Colonic mucosa (tissue), 4 donors: ENCODE measurements at regions of chr3 and their contacts with region 1.

Region 1: DNA sequence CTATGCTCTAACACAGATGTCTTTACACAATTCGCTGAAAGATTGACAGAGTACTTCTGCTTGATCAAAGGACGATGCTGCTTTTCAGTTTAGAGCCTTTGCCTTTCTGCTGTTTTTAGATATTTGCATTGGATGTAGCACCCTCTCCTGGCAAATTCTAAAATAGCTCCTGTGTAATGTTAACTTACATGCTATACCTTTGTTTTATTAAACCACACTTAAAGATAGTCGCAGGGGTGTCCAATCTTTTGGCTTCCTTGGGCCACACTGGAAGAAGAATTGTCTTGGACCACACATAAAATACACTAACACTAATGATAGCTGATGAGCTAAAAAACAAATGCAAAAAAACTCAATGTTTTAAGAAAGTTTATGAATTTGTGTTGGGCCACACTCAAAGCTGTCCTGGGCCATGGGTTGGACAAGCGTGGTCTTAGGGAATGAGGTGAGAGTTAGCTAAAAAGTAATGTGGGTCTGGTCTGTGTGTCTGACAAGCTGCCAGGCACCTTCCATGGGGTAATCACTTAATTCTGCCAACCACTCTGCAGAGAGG is 62.9 kb downstream of the ATG7 start:
- DNase-seq: peak; percentile 23
- H3K4me3 ChIP-seq: no peak overlapping the region
- H3K27ac ChIP-seq: no peak overlapping the region
- H3K4me1 ChIP-seq: no peaks in the 10 kb centered on the region
- H3K27me3 ChIP-seq: no peaks in the 10 kb centered on the region
- CTCF ChIP-seq: peak; percentile 50

Region 2: DNA sequence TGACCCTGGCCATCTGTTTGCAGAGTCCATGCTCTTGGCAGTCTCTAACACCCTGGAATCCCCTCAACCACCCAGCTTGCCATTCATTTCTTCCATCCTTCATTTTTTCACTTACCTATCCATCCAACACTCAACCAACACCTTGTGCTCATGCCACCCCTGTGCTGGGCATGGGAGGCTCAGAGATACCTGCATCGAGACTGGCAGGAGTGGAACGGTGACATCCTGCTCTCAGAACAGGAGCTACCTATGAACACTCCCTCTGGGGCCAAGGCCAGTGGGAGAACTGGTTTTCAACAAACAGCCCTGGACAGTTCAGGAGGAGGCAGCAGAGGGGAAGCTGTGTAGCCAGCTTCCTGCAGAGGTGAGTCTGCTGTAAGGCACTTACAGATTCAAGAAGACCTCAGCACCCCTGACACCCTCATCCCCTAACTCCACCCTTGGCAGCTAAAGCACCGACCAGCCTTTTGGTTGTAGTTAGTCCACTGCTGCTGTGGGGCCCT is 810.3 kb before region 1 on chr3:
- intact Hi-C with region 1: no loop called
- DNase-seq: no peak
- H3K4me3 ChIP-seq: no peak overlapping the region
- H3K27ac ChIP-seq: no peak overlapping the region
- H3K4me1 ChIP-seq: no peaks in the 10 kb centered on the region
- H3K27me3 ChIP-seq: no peaks in the 10 kb centered on the region
- CTCF ChIP-seq: no peak

Region 3: DNA sequence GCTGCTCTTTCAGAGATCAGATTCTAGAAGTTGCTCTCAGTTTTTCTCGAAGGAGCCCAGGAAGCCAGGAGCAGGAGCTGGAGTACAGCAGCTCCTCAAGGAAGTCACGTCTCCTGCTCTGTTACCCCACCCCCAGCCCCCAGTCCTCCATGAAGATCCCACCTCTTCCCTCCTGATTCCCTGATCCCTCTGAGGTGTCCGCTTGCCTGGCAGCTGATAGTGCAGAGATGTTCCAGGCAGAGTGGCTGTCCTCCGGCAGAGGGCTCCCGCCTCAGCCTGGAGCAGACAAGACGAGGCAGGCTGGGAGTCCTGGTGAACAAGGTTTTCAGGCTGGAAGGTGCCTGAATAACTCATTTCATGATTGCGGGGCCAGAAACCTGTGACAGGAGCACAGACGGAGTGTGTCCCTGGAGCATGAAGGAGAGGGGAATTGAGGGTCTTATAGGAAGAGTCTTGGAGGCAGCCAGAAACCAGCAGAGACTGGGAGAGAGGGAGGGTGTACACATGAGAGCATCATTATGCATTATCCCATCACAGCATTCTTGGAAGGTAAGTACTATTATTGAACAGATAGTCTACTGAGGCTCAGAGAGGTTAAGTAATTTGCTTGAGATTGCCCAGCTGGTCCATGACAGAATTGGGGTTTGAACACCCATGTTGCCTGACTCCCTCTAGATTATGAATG is 179.6 kb before region 1 on chr3:
- intact Hi-C with region 1: loop called (anchors 10 kb)
- DNase-seq: peak; percentile 73
- H3K4me3 ChIP-seq: peak overlapping the region; percentile 50
- H3K27ac ChIP-seq: no peak overlapping the region
- H3K4me1 ChIP-seq: peaks cover 7% of the 10 kb centered on the region
- H3K27me3 ChIP-seq: peaks cover 8% of the 10 kb centered on the region
- CTCF ChIP-seq: peak; percentile 60

Region 4: GRCh38 chr3:11236595-11237461 is 98.3 kb before region 1 on chr3:
- intact Hi-C with region 1: loop called (anchors 5 kb)
- DNase-seq: peak; percentile 87
- H3K4me3 ChIP-seq: no peak overlapping the region
- H3K27ac ChIP-seq: no peak overlapping the region
- H3K4me1 ChIP-seq: no peaks in the 10 kb centered on the region
- H3K27me3 ChIP-seq: no peaks in the 10 kb centered on the region
- CTCF ChIP-seq: peak; percentile 83

Region 5: DNA sequence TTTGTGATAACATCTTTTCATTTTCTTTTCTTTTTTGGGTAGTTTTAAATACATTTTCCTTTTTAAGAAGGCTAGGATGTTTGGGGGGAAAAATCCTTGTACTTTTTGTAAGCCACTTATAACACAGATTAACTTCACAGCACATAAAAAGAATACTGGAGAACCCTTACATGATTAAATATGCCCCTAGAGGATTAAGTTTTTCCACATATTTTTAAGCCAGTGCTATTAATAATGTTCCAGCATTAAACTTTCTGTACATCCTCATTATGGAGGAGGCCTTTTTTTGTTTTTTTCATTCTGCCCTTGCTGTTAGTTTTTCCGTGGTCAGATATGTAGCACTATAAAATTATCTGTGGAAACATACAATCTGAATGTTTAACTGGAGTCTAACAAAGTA is 84.9 kb after region 1 on chr3:
- intact Hi-C with region 1: no loop called
- DNase-seq: no peak
- H3K4me3 ChIP-seq: no peak overlapping the region
- H3K27ac ChIP-seq: no peak overlapping the region
- H3K4me1 ChIP-seq: no peaks in the 10 kb centered on the region
- H3K27me3 ChIP-seq: no peaks in the 10 kb centered on the region
- CTCF ChIP-seq: no peak